ENCODE measurements at regions of chr16 and their contacts with region 1.

Region 1: DNA sequence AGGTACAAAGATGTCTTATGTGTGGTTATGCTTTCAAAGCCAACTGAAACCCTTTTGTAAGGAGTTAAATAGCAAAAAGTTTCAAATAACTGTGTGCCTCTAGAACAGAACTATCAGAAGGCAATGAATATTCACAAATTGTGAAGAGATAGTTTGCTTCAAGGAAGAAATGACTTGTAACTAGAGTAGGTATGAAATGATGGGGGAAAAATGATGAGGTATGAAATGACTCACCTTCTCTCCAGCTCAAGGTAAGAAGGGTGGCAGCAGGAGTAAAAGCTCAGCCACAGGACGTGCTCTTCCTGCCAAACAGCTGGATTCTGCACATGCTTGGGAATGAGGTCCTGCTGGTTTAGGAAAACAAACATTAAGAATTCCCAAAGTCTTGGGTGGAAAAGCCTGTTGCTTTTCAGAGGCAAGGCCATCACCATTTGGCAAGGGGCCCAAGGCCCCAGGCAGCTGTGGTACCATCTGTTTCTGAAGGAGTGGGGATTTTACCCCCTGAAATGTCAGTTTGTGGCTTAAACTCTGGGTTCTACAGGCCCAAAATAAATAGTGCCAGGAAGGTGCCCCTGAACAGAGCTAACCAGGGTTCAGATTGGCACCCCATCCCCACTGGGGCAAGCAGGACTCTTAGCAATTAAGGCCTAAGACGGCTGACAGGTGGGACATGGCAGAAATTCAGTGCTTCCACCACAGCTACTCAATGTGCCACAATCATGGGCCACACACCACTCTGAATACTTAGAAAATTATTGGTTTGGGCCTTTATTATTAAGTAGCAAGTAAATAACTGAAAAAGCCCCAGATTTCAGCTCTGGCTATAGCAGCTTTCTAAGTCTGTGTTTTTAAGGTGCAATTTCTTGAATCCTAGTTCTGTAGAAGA is 13.3 kb downstream of the HERPUD1 start:
- DNase-seq: peak; percentile 65
- H3K4me3 Mint-ChIP-seq: peak overlapping the region; percentile 3
- H3K27ac Mint-ChIP-seq: peak overlapping the region; percentile 96
- H3K4me1 Mint-ChIP-seq: peaks cover 56% of the 10 kb centered on the region
- H3K27me3 Mint-ChIP-seq: no peaks in the 10 kb centered on the region

Region 2: GRCh38 chr16:56729735-56730662 is 215.2 kb before region 1 on chr16 and contains the start of gene NUP93:
- CTCF ChIA-PET with region 1: no interaction called
- intact Hi-C with region 1: loop called (anchors 2 kb)
- DNase-seq: peak; percentile 94
- H3K4me3 Mint-ChIP-seq: no peak within 1 kb of the TSS
- H3K27ac Mint-ChIP-seq: peak within 1 kb of the TSS; percentile 78
- H3K4me1 Mint-ChIP-seq: peaks cover 14% of the 10 kb centered on the region
- H3K27me3 Mint-ChIP-seq: no peaks in the 10 kb centered on the region
- total RNA-seq, gene NUP93: 161 to 172 TPM

Region 3: GRCh38 chr16:56866943-56867830 is 78.0 kb before region 1 on chr16:
- CTCF ChIA-PET with region 1: interaction called, 200 read pairs
- intact Hi-C with region 1: loop called (anchors 1 kb)
- DNase-seq: peak; percentile 64
- H3K4me3 Mint-ChIP-seq: no peak overlapping the region
- H3K27ac Mint-ChIP-seq: no peak overlapping the region
- H3K4me1 Mint-ChIP-seq: peaks cover 15% of the 10 kb centered on the region
- H3K27me3 Mint-ChIP-seq: no peaks in the 10 kb centered on the region

Region 4: GRCh38 chr16:56916571-56917403 is 28.4 kb before region 1 on chr16:
- CTCF ChIA-PET with region 1: interaction called, 9 read pairs
- intact Hi-C with region 1: loop called (anchors 1 kb)
- DNase-seq: peak; percentile 69
- H3K4me3 Mint-ChIP-seq: peak overlapping the region; percentile 7
- H3K27ac Mint-ChIP-seq: peak overlapping the region; percentile 76
- H3K4me1 Mint-ChIP-seq: peaks cover 40% of the 10 kb centered on the region
- H3K27me3 Mint-ChIP-seq: no peaks in the 10 kb centered on the region

Region 5: DNA sequence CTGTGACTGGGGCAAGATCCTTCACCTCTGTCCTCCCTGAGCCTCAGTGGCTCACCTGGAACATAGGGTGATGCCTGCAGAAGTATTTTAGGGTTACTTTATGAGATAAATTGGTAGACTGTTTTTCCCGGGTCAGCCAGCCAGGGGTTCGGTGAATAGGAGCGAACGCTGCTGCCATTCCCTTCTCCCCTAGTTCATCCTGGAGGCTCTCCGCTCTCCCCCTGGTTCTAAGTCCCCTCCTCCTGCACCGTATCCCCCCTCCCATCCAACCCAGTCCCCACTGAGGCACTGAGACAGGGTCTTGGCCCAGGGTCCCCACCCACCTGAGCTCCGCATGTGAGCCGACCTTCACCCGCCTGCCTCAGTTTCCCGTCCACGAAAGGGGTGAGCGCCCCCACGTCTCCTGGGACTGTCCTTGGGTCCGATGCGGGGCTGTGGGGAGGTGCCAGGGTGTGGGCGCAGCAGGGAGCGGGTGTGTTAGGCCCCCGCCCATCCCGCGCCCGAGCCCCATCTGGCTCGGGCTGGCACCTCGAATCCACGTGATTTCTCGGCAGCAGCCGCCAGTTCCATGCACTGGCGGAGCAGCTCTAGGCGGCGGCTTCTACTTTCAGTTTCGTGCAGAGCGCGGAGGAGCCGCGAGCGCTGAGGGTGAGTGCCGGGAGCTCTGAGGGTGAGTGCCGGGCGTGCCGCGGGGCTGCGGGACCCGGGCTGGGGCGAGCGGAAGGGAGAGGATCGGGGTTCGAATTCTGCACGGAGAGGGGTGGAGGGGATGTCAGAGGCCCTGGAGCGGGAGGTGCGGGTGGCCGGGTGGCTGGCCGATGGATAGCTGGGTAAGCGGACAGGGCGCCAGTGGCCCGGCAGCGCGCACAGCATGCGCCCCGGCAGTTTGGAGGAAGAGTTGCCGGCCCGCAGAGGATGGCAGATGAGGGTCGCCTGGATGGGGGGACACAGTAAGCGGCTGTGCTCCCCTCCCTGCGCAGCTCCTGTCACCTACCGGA is 44.0 kb after region 1 on chr16 and contains the start of gene NLRC5:
- CTCF ChIA-PET with region 1: no interaction called
- intact Hi-C with region 1: loop called (anchors 2 kb)
- DNase-seq: peak; percentile 95
- H3K4me3 Mint-ChIP-seq: peak within 1 kb of the TSS; percentile 99
- H3K27ac Mint-ChIP-seq: peak within 1 kb of the TSS; percentile 100
- H3K4me1 Mint-ChIP-seq: peaks cover 73% of the 10 kb centered on the region
- H3K27me3 Mint-ChIP-seq: no peaks in the 10 kb centered on the region
- total RNA-seq, gene NLRC5: 104 to 119 TPM

Region 6: GRCh38 chr16:57013229-57013628 is 68.0 kb after region 1 on chr16:
- CTCF ChIA-PET with region 1: no interaction called
- intact Hi-C with region 1: loop called (anchors 1 kb)
- DNase-seq: no peak
- H3K4me3 Mint-ChIP-seq: no peak overlapping the region
- H3K27ac Mint-ChIP-seq: peak overlapping the region; percentile 97
- H3K4me1 Mint-ChIP-seq: peaks cover 85% of the 10 kb centered on the region
- H3K27me3 Mint-ChIP-seq: no peaks in the 10 kb centered on the region

Region 7: GRCh38 chr16:57071831-57072582 is 126.8 kb after region 1 on chr16:
- CTCF ChIA-PET with region 1: no interaction called
- intact Hi-C with region 1: no loop called
- DNase-seq: no peak
- H3K4me3 Mint-ChIP-seq: no peak overlapping the region
- H3K27ac Mint-ChIP-seq: peak overlapping the region; percentile 44
- H3K4me1 Mint-ChIP-seq: peaks cover 12% of the 10 kb centered on the region
- H3K27me3 Mint-ChIP-seq: no peaks in the 10 kb centered on the region

Measured in activated naive CD4-positive, alpha-beta T cell treated with anti-CD3 and anti-CD28 coated beads for 36 hours (primary cell).